Activated CD4-positive, alpha-beta memory T cell treated with anti-CD3 and anti-CD28 coated beads for 36 hours (primary cell): ENCODE measurements at regions of chr19 and their contacts with region 1.

Region 1: GRCh38 chr19:19138169-19138981 is at the start of gene TMEM161A:
- DNase-seq: peak; percentile 99
- H3K4me3 Mint-ChIP-seq: peak within 1 kb of the TSS; percentile 86
- H3K27ac Mint-ChIP-seq: peak within 1 kb of the TSS; percentile 78
- H3K4me1 Mint-ChIP-seq: peaks cover 29% of the 10 kb centered on the region
- H3K27me3 Mint-ChIP-seq: no peaks in the 10 kb centered on the region
- total RNA-seq, gene TMEM161A: 17.8 to 18.9 TPM

Region 2: GRCh38 chr19:19053508-19054314 is 84.7 kb before region 1 on chr19:
- CTCF ChIA-PET with region 1: interaction called, 17 read pairs
- POLR2A ChIA-PET with region 1: no interaction called
- intact Hi-C with region 1: loop called (anchors 1 kb)
- DNase-seq: peak; percentile 58
- H3K4me3 Mint-ChIP-seq: no peak overlapping the region
- H3K27ac Mint-ChIP-seq: no peak overlapping the region
- H3K4me1 Mint-ChIP-seq: no peaks in the 10 kb centered on the region
- H3K27me3 Mint-ChIP-seq: no peaks in the 10 kb centered on the region

Region 3: GRCh38 chr19:19063183-19064097 is 74.9 kb before region 1 on chr19 and contains the start of gene SLC25A42:
- CTCF ChIA-PET with region 1: interaction called, 5 read pairs
- POLR2A ChIA-PET with region 1: no interaction called
- intact Hi-C with region 1: loop called (anchors 2 kb)
- DNase-seq: peak; percentile 99
- H3K4me3 Mint-ChIP-seq: peak within 1 kb of the TSS; percentile 79
- H3K27ac Mint-ChIP-seq: peak within 1 kb of the TSS; percentile 72
- H3K4me1 Mint-ChIP-seq: peaks cover 31% of the 10 kb centered on the region
- H3K27me3 Mint-ChIP-seq: no peaks in the 10 kb centered on the region
- total RNA-seq, gene SLC25A42: 12.2 to 12.4 TPM

Region 4: GRCh38 chr19:19320362-19321142 is 182.2 kb after region 1 on chr19 and contains the starts of genes MAU2 and SUGP1:
- CTCF ChIA-PET with region 1: no interaction called
- POLR2A ChIA-PET with region 1: no interaction called
- intact Hi-C with region 1: loop called (anchors 2 kb)
- DNase-seq: peak; percentile 94
- H3K4me3 Mint-ChIP-seq: peak within 1 kb of the TSS; percentile 94
- H3K27ac Mint-ChIP-seq: peak within 1 kb of the TSS; percentile 96
- H3K4me1 Mint-ChIP-seq: peaks cover 35% of the 10 kb centered on the region
- H3K27me3 Mint-ChIP-seq: no peaks in the 10 kb centered on the region
- total RNA-seq, gene MAU2: 38.6 to 40.9 TPM
- total RNA-seq, gene SUGP1: 39.2 to 44.0 TPM

Region 5: DNA sequence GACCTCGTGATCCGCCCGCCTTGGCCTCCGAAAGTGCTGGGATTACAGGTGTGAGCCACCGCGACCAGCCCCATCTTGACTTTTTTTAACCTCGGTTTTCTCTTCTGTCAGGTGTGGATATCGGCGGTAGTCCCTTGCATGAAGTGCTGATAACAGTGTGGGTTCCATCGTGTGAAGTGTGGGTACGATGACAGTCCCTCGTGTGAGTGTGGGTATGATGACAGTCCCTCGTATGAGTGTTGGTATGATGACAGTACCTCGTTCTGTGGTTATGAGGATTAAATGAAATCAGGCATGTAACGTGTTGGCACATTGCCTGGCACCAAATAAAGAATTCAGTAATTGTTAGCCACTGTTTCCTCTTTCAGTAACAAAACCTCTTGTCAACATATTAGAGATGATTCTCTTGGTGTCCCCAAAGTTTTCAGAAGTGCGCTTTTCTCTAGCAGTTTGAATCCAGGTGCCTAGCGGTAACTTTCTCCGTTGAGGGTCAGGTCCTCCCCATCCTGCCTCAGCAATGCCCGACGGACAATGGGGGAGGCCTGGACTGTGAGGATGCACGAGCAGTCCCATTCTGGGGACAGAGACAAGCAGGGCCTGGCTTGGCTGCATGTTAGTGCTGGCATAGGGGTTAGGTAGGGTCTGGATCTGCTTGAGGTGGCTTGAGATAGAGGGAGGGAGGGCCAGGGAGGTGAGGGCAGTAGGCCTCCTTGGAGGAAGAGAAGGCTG is 282.4 kb after region 1 on chr19:
- CTCF ChIA-PET with region 1: no interaction called
- POLR2A ChIA-PET with region 1: no interaction called
- intact Hi-C with region 1: no loop called
- DNase-seq: peak; percentile 49
- H3K4me3 Mint-ChIP-seq: no peak overlapping the region
- H3K27ac Mint-ChIP-seq: peak overlapping the region; percentile 49
- H3K4me1 Mint-ChIP-seq: peaks cover 78% of the 10 kb centered on the region
- H3K27me3 Mint-ChIP-seq: no peaks in the 10 kb centered on the region